ENCODE measurements at regions of chr5 and their contacts with region 1.

Region 1: GRCh38 chr5:60295423-60295822 is 401.9 kb upstream of the PDE4D start:
- DNase-seq: peak; percentile 31
- ATAC-seq: peak; percentile 92
- H3K4me3 ChIP-seq: no peak overlapping the region
- H3K27ac ChIP-seq: no peak overlapping the region
- H3K4me1 ChIP-seq: peaks cover 4% of the 10 kb centered on the region; the same call in 1 of the 2 replicates
- H3K27me3 ChIP-seq: no peaks in the 10 kb centered on the region
- CTCF ChIP-seq: peak; percentile 86
- EP300 ChIP-seq: no peak
- POLR2A ChIP-seq: no peak
- RAD21 ChIP-seq: peak; percentile 89

Region 2: DNA sequence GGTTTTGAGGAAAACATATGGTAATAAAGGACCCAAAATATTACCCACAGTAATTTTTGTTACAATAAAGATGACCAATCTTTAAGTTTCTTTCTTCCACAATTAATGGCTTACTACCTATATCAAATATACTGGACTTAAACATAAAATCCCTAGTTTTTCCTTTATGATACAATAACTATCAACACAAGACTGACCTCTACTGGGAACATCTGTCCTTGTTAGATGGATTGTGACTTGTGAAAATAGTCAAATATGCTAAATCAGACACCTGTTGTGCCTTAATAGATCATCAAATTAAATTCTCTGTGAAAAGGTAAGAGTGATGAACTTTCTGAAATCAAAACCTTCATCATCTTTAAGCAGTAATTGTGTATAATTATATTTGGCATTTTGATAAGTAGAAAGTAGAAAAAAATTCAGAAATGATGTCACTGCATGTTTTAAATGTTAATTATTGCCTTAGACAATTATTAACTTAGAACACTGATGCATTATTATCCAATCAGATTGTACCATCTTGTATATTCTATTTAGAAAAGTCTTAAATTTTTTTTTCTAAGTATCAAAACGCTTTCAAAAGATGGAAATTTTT is 291.0 kb after region 1 on chr5:
- CTCF ChIA-PET with region 1: interaction called, 4 read pairs
- POLR2A ChIA-PET with region 1: no interaction called
- in situ Hi-C with region 1: loop called (anchors 10 kb)
- intact Hi-C with region 1: loop called (anchors 1 kb)
- DNase-seq: peak; percentile 54
- ATAC-seq: 0 out of 3 replicates have a peak, but pooled peaks have one; percentile 30
- H3K4me3 ChIP-seq: no peak overlapping the region
- H3K27ac ChIP-seq: no peak overlapping the region
- H3K4me1 ChIP-seq: peaks cover 12% of the 10 kb centered on the region; the same call in 1 of the 2 replicates
- H3K27me3 ChIP-seq: no peaks in the 10 kb centered on the region
- CTCF ChIP-seq: peak; percentile 67
- EP300 ChIP-seq: no peak
- POLR2A ChIP-seq: no peak
- RAD21 ChIP-seq: peak; percentile 62

Region 3: DNA sequence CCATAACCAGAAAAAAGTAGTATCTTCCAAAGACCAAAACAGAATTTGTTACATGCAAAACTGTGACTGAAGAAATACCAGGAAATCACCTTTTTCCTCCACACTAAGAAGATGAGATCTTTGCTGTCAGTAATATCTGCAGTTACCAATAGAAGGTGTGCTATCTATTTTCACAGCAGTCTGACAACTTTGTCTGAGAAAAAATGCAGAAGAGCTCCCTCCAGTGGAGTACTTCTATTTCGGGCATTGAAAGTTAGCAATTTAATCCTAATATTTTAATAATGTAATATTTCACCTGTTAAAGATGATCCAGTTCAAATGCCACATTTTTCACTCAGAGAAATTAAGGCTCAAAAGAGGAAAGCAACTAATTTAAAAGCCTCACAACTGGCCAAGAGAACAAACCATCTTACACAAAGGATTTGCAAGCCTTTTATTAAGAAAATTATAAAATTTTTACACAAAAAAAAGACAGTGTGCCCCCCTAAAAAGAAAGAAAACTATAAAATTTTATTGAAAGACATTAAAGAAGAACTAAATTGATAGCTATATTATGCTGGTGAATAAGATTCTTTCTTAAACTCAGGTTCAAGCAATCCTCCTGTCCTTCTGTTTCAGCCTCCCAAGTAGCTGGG is 354.0 kb after region 1 on chr5:
- CTCF ChIA-PET with region 1: interaction called, 3 read pairs
- POLR2A ChIA-PET with region 1: no interaction called
- in situ Hi-C with region 1: no loop called
- intact Hi-C with region 1: loop called (anchors 1 kb)
- DNase-seq: peak; percentile 59
- ATAC-seq: peak; percentile 66
- H3K4me3 ChIP-seq: no peak overlapping the region
- H3K27ac ChIP-seq: no peak overlapping the region
- H3K4me1 ChIP-seq: peaks cover 22% of the 10 kb centered on the region
- H3K27me3 ChIP-seq: no peaks in the 10 kb centered on the region
- CTCF ChIP-seq: peak; percentile 65
- EP300 ChIP-seq: no peak
- POLR2A ChIP-seq: no peak
- RAD21 ChIP-seq: peak; percentile 52; the same call in 1 of the 2 replicates

Measured in HepG2 (cell line).